Ovary (tissue), 10 donors: ENCODE measurements at regions of chr19 and their contacts with region 1.

Region 1: DNA sequence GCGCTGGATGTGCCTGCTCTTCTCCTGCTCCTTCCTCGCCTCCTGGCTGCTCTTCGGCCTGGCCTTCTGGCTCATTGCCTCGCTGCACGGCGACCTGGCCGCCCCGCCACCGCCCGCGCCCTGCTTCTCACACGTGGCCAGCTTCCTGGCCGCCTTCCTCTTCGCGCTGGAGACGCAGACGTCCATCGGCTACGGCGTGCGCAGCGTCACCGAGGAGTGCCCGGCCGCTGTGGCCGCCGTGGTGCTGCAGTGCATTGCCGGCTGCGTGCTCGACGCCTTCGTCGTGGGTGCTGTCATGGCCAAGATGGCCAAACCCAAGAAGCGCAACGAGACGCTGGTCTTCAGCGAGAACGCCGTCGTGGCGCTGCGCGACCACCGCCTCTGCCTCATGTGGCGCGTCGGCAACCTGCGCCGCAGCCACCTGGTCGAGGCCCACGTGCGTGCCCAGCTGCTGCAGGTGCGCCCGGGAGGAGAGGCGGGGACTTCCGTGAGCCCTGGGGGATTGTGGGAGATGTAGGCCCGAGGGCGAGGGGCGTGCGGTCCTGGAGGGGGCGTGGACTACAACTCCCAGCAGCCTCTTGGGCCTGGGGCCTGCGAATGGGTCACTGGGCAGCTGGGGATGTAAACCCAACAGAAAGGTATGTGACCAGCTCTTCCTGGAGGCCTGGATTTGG is 6.7 kb downstream of the KCNJ14 start:
- DNase-seq: peak in 1 of 5 donors; percentile 27
- H3K4me3 ChIP-seq: no peak overlapping the region
- H3K27ac ChIP-seq: no peak overlapping the region
- H3K4me1 ChIP-seq: no peaks in the 10 kb centered on the region
- H3K27me3 ChIP-seq: no peaks in the 10 kb centered on the region
- CTCF ChIP-seq: no peak
- EP300 ChIP-seq: no peak
- POLR2A ChIP-seq: no peak

Region 2: GRCh38 chr19:48501496-48502350 is 39.6 kb after region 1 on chr19:
- intact Hi-C with region 1: loop called in 1 of 4 experiments (anchors 5 kb)
- DNase-seq: peak in 1 of 5 donors; percentile 44
- H3K4me3 ChIP-seq: no peak overlapping the region
- H3K27ac ChIP-seq: no peak overlapping the region
- H3K4me1 ChIP-seq: peaks cover 3% of the 10 kb centered on the region
- H3K27me3 ChIP-seq: peaks cover 2% of the 10 kb centered on the region
- CTCF ChIP-seq: no peak
- EP300 ChIP-seq: no peak
- POLR2A ChIP-seq: no peak